Cardiac septum (tissue), 1 donor: ENCODE measurements at regions of chr9 and their contacts with region 1.

Region 1: GRCh38 chr9:131762356-131762932 is 22.6 kb upstream of the RAPGEF1 start:
- DNase-seq: peak; percentile 87

Region 2: GRCh38 chr9:132250324-132251262 is 488.1 kb after region 1 on chr9:
- intact Hi-C with region 1: loop called (anchors 5 kb)
- DNase-seq: peak; percentile 70

Region 3: GRCh38 chr9:132268725-132269352 is 506.4 kb after region 1 on chr9:
- intact Hi-C with region 1: loop called (anchors 2 kb)
- DNase-seq: no peak